Kidney (tissue), 22 donors: ENCODE measurements at regions of chr1 and their contacts with region 1.

Region 1: DNA sequence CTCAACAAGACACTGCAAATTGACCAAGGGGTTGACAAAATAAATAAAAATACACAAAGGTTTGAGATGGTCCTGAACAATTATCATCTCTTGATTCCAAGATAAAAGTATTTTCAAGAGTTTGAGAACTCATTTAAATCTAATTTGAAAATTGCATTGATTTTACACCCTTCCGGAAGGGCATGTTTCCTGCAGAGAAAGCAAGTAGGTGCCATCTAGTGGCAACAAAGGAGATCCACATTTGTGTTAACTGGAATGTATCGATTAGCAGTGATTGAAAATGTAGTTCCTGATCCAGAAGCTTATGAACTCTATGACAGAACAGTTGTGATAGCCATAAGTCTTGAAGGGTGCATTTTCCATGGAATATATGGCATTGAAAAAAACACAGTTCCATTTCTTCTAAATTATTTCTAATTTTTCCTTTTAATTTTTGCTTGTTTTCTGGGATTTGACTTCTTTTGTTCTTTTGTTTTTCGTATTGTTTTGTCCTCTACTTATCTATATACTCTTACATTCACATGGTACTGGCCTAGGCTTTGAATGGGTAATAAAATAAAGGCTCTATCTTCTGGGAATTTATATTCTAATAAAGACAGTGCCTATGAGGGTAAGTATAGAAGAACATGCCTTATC is 143.7 kb downstream of the DNM3 start:
- DNase-seq: peak in 1 of 5 donors; percentile 26
- H3K4me3 ChIP-seq: no peak overlapping the region
- H3K27ac ChIP-seq: no peak overlapping the region
- H3K4me1 ChIP-seq: no peaks in the 10 kb centered on the region
- H3K27me3 ChIP-seq: no peaks in the 10 kb centered on the region
- CTCF ChIP-seq: peak; percentile 69

Region 2: DNA sequence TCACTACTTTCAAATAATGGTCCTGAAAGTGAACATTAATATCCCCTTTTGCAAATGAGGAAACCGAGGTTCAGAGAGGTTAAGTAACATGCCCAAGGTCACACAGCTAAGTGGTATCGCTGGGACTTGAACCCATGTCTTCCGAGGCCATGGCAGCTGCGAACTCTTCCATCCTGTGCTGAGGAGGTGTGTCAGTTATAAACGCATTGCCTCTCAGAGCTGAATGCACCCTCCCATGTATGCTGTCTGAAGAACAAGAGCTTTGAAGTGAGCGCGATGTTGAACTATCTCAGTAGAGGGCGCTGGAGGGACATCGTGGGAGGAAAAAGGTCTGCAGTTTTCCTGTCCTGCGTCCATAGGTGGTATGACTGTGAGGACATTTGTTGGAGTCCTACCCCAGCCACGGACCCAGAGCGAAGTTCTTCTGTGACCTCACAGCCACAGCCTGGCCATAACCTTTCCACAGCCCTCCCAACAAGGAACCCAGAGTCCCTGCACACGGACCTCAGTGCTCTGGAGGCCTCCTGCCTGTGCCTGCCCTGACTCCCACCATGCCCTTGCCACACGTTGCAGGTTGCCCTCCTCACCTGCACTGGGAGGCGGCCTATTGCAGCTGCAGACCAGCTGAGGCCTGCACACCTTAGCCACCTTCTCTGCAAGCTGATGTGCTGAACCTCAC is 340.0 kb before region 1 on chr1:
- intact Hi-C with region 1: loop called (anchors 10 kb)
- DNase-seq: peak; percentile 73 to 95 (median 88)
- H3K4me3 ChIP-seq: peak overlapping the region in 1 of 3 donors; percentile 32
- H3K27ac ChIP-seq: no peak overlapping the region
- H3K4me1 ChIP-seq: peaks cover 0 to 8% (median 0%) of the 10 kb centered on the region in 3 donors
- H3K27me3 ChIP-seq: no peaks in the 10 kb centered on the region
- CTCF ChIP-seq: peak; percentile 76

Region 3: DNA sequence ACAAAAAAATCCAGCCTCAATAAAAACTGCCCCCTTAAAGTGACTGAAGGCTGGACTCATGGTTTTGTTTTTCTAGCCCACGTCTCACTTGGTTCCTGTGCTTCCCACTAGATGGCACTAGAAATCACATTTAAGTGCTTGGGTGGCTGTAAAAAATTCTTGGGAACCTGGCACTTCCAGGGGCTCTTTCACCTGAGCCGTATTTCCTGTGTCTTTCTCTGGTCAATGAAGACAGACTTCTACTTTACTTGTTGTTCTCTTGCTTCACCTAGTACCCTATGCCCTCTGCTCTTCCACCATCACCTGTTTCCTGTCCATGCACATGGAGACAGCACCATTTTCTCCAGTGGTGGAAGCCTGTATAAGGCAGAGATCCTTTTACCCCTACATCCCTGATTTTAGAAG is 183.5 kb before region 1 on chr1:
- intact Hi-C with region 1: loop called (anchors 5 kb)
- DNase-seq: peak in 4 of 5 donors; percentile 44 to 82 (median 66)
- H3K4me3 ChIP-seq: no peak overlapping the region
- H3K27ac ChIP-seq: no peak overlapping the region
- H3K4me1 ChIP-seq: peaks cover 0 to 7% (median 0%) of the 10 kb centered on the region in 3 donors
- H3K27me3 ChIP-seq: no peaks in the 10 kb centered on the region
- CTCF ChIP-seq: peak; percentile 78